ENCODE measurements at regions of chr12 and their contacts with region 1.

Region 1: DNA sequence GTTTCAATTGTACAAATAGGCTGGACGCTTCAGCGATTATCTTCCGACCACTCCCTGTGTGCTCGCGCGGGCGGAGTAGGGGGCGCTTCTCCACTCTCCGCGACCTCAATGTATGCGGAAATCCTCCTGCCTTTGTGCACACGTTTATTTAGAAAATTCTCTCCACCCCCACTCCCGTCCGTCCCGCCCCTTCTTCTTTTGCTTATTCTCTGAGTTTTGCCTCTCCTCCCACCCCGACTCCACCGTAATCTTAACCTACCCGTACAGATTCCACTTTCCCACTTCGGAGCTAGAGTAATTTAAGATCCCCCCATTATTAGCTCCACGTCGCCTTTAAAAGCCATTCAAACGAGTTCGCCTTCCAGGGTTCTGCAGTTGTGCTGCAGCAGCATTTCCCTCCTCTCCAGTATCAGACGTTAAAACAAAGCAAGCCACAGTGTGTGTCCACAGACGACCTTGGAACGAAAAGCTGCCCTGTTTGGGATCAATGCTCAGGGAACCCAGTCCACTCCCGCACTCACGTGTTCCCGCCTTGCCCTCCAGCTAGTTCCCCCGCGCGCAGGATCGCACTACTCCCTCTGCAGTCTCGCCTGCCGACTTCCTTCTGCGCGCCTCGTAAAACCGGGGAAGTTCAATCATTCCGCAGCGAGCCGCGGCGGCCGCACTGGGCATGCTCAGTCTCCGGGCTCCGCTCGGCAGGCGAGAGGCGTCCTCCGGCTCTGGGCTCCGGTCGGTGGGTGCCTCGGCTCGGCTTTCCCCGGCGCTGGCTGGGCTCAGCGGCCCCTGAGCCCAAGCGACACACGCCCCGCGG is at the start of gene ANO6:
- DNase-seq: peak; percentile 81 to 90 (median 85)
- H3K4me3 ChIP-seq: peak within 1 kb of the TSS; percentile 88
- H3K27ac ChIP-seq: peak within 1 kb of the TSS; percentile 93 to 94
- H3K4me1 ChIP-seq: peaks cover 11% of the 10 kb centered on the region
- H3K27me3 ChIP-seq: no peaks in the 10 kb centered on the region
- CTCF ChIP-seq: no peak
- EP300 ChIP-seq: no peak
- POLR2A ChIP-seq: peak; percentile 63
- total RNA-seq, gene ANO6: 52.8 to 83.0 (median 63.2) TPM

Region 2: DNA sequence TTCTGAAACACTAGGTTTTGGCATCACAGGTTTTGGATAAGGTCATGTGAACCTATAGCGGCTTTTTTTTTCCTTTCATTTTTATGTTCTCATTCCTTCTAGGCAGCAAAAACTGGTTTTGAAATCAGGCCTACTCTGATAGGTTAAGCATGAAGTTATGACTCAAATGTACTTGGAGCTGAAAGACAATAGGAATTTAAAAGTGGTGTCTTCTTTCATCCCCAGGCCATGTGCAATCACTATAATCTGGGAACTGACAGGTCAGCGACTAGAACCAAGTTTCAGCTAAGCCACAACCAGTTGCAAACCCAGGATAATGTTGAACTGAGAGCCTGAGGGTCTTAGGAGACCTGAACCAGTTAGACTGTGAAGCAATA is 74.6 kb after region 1 on chr12:
- intact Hi-C with region 1: no loop called
- DNase-seq: no peak
- H3K4me3 ChIP-seq: no peak overlapping the region
- H3K27ac ChIP-seq: no peak overlapping the region
- H3K4me1 ChIP-seq: peaks cover 8% of the 10 kb centered on the region
- H3K27me3 ChIP-seq: no peaks in the 10 kb centered on the region
- CTCF ChIP-seq: no peak
- EP300 ChIP-seq: no peak
- POLR2A ChIP-seq: no peak

Region 3: GRCh38 chr12:45388545-45388944 is 172.9 kb after region 1 on chr12:
- intact Hi-C with region 1: loop called in 3 of 4 experiments (anchors 10 kb)
- DNase-seq: peak in 3 of 5 donors; percentile 20 to 58 (median 47)
- H3K4me3 ChIP-seq: no peak overlapping the region
- H3K27ac ChIP-seq: no peak overlapping the region
- H3K4me1 ChIP-seq: no peaks in the 10 kb centered on the region
- H3K27me3 ChIP-seq: no peaks in the 10 kb centered on the region
- CTCF ChIP-seq: peak; percentile 36 to 59 (median 52)
- EP300 ChIP-seq: no peak
- POLR2A ChIP-seq: no peak